ENCODE measurements at regions of chr13 and their contacts with region 1.

Region 1: DNA sequence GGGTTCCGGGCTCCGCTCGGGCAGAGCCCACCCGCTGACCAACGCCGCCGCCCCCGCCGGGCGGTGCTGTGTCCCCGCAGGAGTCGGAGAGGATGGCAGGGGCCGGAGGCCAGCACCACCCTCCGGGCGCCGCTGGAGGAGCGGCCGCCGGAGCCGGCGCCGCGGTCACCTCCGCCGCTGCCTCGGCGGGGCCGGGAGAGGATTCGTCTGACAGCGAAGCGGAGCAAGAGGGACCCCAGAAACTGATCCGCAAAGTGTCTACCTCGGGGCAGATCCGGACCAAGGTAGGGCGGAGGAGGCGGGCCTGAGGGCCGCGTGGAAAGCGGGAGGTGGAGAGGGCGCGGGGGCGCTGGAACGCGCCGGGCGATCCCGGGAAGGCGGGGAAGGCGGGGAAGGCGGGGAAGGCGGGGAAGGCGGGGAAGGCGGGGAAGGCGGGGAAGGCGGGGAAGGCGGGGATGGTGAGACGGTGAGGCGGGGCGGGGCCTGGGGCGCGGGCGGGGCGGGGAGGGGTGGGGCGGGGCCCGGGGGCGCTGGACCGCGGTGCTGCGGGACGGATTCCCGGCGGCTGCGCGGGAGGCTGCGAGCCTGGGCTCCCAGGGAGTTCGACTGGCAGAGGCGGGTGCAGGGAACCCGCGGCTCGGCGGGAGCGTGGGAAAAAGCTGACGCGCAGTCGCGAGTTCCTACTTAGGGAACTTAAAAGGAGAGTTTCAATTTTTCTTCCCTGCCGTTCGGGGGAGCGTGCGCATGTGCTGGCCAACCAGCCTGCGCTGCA is 420 bp downstream of the DGKH start:
- DNase-seq: peak; percentile 47 to 84
- H3K4me3 ChIP-seq: peak overlapping the region; percentile 85 to 96 (median 93)
- H3K27ac ChIP-seq: peak overlapping the region; percentile 87 to 94
- H3K4me1 ChIP-seq: no peaks in the 10 kb centered on the region
- H3K27me3 ChIP-seq: no peaks in the 10 kb centered on the region
- CTCF ChIP-seq: no peak
- POLR2A ChIP-seq: peak; percentile 22

Region 2: DNA sequence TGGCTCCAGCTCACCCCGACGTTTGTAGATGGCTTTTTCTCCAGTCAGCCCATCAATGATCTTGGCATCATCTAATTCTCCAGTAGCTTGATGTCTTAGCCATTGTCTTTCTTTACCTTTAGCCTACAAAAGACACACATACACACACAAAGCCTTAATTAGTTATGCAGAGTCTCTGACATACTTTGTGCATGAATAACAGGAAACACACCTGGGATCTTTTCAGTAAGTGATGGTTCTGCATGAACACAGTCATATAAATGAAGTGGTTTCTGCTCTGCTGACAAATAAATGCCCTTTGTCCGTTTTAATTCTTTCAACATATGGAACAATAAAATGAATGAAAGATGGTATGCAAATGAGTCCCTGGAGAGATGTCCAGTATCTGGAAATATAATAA is 458.2 kb before region 1 on chr13:
- intact Hi-C with region 1: loop called (anchors 5 kb)
- DNase-seq: no peak
- H3K4me3 ChIP-seq: no peak overlapping the region
- H3K27ac ChIP-seq: no peak overlapping the region
- H3K4me1 ChIP-seq: no peaks in the 10 kb centered on the region
- H3K27me3 ChIP-seq: no peaks in the 10 kb centered on the region
- CTCF ChIP-seq: no peak
- POLR2A ChIP-seq: no peak

Region 3: GRCh38 chr13:42038661-42039456 is 10.0 kb before region 1 on chr13:
- intact Hi-C with region 1: no loop called
- DNase-seq: no peak
- H3K4me3 ChIP-seq: peak overlapping the region in 2 of 3 donors; percentile 81 to 92
- H3K27ac ChIP-seq: peak overlapping the region; percentile 94 to 96
- H3K4me1 ChIP-seq: no peaks in the 10 kb centered on the region
- H3K27me3 ChIP-seq: no peaks in the 10 kb centered on the region
- CTCF ChIP-seq: no peak
- POLR2A ChIP-seq: no peak